ENCODE measurements at regions of chr4 and their contacts with region 1.

Region 1: DNA sequence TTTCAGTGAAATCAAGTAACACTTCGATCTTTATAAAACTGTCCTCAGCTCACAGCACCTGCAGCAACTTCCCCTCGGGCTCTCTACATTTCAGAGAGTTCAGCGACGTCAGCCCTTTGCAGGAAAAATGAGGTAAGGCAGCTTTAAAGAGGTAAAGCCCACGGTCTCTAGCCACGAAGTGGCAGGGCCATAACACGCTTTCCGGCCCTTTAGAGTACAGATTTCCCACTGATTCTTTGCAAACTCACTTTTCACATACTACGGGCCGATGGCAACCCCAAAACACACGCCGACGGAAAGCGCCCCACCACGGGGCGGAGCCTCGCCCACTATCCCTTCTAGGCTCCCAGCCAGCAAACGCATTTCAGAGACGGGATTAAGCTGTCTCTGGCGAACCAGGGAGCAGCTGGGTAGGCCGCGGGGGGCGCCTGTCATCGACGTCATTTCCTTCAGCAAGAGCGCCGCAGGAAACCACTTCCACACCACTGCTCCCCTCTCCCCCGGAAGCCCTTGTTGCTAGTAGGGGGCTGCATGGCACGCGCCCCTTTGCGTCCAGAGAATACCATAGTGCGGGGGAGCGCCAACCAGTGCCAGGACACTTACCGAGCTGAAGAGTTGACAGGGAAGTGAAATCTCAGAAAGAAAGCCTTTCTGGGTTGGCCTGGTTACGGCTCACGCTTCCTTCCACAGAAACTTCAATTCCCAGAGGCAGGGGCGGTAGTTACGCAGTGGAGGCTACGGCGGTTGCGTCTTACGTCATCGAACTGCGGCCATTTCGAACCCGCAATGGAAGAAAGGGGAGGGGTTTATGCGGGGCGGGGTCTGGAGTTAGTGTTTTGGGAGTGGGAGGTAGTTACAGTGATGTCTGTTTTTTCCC is at the start of gene TRMT10A:
- DNase-seq: peak; percentile 97
- H3K4me3 Mint-ChIP-seq: peak within 1 kb of the TSS; percentile 97
- H3K27ac Mint-ChIP-seq: peak within 1 kb of the TSS; percentile 99
- H3K4me1 Mint-ChIP-seq: peaks cover 16% of the 10 kb centered on the region
- H3K27me3 Mint-ChIP-seq: peaks cover 13% of the 10 kb centered on the region
- total RNA-seq, gene TRMT10A: 7.4 and 8.6 TPM in 2 replicates

Region 2: DNA sequence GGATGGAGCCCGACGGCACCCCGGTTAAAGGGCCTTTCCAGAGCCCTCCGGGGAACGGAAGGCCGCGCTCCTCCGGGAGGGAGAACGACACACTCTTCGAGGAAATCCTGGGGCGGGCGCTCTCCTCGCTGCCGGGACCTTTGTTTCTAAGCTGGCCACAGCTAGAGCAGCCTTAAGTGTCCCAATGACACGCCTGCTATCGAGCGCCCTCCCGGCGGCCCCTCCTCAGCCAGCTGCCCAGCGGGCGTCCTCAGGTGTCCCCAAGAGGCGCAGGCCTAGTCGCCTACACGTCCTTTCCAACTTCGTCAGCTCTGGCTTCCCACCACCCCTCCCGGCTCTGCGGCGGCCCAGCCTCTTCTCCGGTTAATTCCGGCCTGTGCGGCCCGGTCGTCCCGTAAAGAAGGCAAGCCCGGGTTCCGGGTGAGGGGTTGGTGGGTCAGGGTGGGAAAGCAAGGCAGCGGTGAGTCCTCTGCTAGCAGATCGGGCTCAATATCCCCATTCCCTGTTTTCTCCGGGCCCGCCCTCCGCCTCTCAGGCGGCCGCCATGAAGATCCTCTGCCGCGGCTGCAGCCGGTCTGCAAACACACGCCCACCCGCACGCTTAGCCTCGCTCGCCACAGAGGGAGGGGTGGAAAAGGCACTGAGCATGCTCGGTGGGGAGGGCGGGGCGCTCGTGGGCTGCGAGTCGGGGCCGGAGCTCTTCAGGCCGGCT is 1302.8 kb before region 1 on chr4:
- intact Hi-C with region 1: loop called (anchors 5 kb)
- DNase-seq: peak; percentile 97
- H3K4me3 Mint-ChIP-seq: peak overlapping the region; percentile 95
- H3K27ac Mint-ChIP-seq: peak overlapping the region; percentile 96
- H3K4me1 Mint-ChIP-seq: peaks cover 35% of the 10 kb centered on the region
- H3K27me3 Mint-ChIP-seq: peaks cover 4% of the 10 kb centered on the region

Region 3: GRCh38 chr4:99504804-99505569 is 58.6 kb before region 1 on chr4:
- intact Hi-C with region 1: loop called (anchors 1 kb)
- DNase-seq: no peak
- H3K4me3 Mint-ChIP-seq: no peak overlapping the region
- H3K27ac Mint-ChIP-seq: peak overlapping the region; percentile 45
- H3K4me1 Mint-ChIP-seq: peaks cover 34% of the 10 kb centered on the region
- H3K27me3 Mint-ChIP-seq: no peaks in the 10 kb centered on the region

Region 4: DNA sequence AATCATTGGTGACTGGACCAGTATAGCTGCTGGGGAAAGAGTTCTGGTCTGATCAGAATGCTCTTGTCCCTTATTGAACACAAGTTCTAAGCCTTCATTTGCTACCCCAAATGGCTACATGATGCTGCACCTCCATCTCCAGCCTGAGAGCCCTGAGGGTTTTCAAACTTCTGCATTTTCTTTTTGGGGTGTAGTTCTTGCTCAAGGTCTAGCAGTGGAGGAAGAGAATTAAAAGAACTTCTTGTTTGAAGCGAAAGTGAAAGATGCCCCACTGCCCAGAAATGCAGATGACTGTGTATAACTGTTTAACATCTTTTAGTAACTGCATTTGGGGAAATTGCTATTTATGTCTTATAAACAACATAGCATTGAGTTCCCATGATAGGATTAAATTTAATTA is 292.1 kb after region 1 on chr4:
- intact Hi-C with region 1: loop called (anchors 1 kb)
- DNase-seq: peak; percentile 82
- H3K4me3 Mint-ChIP-seq: peak overlapping the region; percentile 68
- H3K27ac Mint-ChIP-seq: peak overlapping the region; percentile 88
- H3K4me1 Mint-ChIP-seq: peaks cover 67% of the 10 kb centered on the region
- H3K27me3 Mint-ChIP-seq: no peaks in the 10 kb centered on the region

Region 5: GRCh38 chr4:99894161-99894997 is 330.8 kb after region 1 on chr4 and contains the start of gene LAMTOR3:
- intact Hi-C with region 1: loop called (anchors 1 kb)
- DNase-seq: peak; percentile 96
- H3K4me3 Mint-ChIP-seq: peak within 1 kb of the TSS; percentile 94
- H3K27ac Mint-ChIP-seq: peak within 1 kb of the TSS; percentile 94
- H3K4me1 Mint-ChIP-seq: peaks cover 32% of the 10 kb centered on the region
- H3K27me3 Mint-ChIP-seq: no peaks in the 10 kb centered on the region
- total RNA-seq, gene LAMTOR3: 28.0 and 32.8 TPM in 2 replicates